Heart left ventricle (tissue), 16 donors: ENCODE measurements at regions of chr9 and their contacts with region 1.

Region 1: DNA sequence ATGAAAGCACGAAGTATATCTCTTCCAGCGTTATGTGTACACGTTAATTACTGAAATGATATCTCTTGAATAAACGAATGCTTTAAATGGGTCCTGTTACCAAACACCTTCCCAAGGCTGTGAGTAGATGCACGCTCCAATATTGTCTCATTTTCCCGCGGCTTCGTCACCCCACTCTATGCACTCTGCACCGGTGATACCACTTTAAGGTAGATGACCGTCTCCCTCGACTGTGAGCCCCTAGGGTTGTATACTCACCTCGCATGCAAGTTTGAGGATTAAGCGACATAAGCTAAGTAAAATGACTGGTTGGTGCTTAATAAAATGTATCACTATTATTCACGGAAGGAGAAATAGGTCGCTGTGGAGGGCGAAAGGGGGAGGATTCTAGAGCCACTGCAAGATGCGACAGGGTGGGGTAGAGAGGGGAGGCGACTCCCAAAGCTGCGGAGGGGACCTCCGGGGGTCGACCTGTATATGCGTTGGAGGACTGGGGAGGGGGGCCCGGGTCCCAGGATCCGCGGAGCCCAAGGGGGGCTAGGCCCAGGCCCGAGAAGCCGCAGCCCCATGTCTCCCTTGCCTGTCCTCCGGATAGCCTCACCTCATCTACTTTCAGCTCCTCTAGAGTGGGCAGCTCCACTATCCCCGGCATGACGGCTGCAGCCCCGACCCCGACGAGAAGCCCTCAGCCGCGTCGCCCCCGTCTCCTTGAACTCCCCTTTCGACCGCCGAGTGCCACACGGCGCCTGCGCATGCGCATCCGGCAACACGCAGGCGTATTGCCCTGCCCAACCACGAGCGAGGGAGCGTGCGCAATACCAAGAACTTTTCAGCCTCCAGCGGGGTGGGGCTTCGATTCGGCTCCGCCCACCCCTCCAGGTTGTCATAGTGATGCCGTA is at the starts of genes MORN5 and NDUFA8:
- DNase-seq: peak; percentile 95 to 98 (median 97)
- ATAC-seq: peak; percentile 96 to 99 (median 97)
- H3K4me3 ChIP-seq: peak within 1 kb of the TSS; percentile 71 to 98 (median 89)
- H3K27ac ChIP-seq: peak within 1 kb of the TSS; percentile 90 to 98 (median 96)
- H3K4me1 ChIP-seq: peaks cover 4 to 48% (median 34%) of the 10 kb centered on the region in 12 donors
- H3K27me3 ChIP-seq: no peaks in the 10 kb centered on the region
- CTCF ChIP-seq: peak in 3 of 12 donors; percentile 7 to 10 (median 8)
- POLR2A ChIP-seq: peak; percentile 93 to 94
- total RNA-seq, gene MORN5: not detected
- total RNA-seq, gene NDUFA8: 183 to 316 (median 260) TPM

Region 2: GRCh38 chr9:122264360-122265148 is 105.3 kb after region 1 on chr9 and contains the starts of genes MRRF and RBM18:
- intact Hi-C with region 1: loop called in 3 of 10 experiments (anchors 2 to 10 kb)
- DNase-seq: peak; percentile 92 to 95 (median 93)
- ATAC-seq: peak; percentile 76 to 93 (median 90)
- H3K4me3 ChIP-seq: peak within 1 kb of the TSS; percentile 52 to 77 (median 72)
- H3K27ac ChIP-seq: peak within 1 kb of the TSS; percentile 78 to 97 (median 94)
- H3K4me1 ChIP-seq: peaks cover 19 to 61% (median 44%) of the 10 kb centered on the region in 12 donors
- H3K27me3 ChIP-seq: no peaks in the 10 kb centered on the region
- CTCF ChIP-seq: peak in 1 of 12 donors; percentile 7
- POLR2A ChIP-seq: peak in 1 of 2 donors; percentile 74
- total RNA-seq, gene MRRF: 29.2 to 44.5 (median 36.0) TPM
- total RNA-seq, gene RBM18: 24.7 to 49.0 (median 38.4) TPM